Activated CD8-positive, alpha-beta memory T cell treated with anti-CD3 and anti-CD28 coated beads, Interleukin-2, amount 10 ng/mL, durations not matched to agents 7 days and 5 days (primary cell): ENCODE measurements at regions of chr7 and their contacts with region 1.

Region 1: GRCh38 chr7:107563775-107564552 is at the starts of genes COG5 and DUS4L:
- DNase-seq: peak; percentile 90
- ATAC-seq: peak; percentile 90
- H3K4me3 Mint-ChIP-seq: peak within 1 kb of the TSS; percentile 79
- H3K27ac Mint-ChIP-seq: peak within 1 kb of the TSS; percentile 91
- H3K4me1 Mint-ChIP-seq: peaks cover 61% of the 10 kb centered on the region
- H3K27me3 Mint-ChIP-seq: no peaks in the 10 kb centered on the region
- total RNA-seq, gene COG5: 37.1 to 44.6 TPM
- total RNA-seq, gene DUS4L: 9.3 to 10.2 TPM

Region 2: GRCh38 chr7:107579885-107580715 is 16.1 kb after region 1 on chr7 and contains the start of gene BCAP29:
- CTCF ChIA-PET with region 1: interaction called, 12 read pairs
- DNase-seq: peak; percentile 80
- ATAC-seq: peak; percentile 96
- H3K4me3 Mint-ChIP-seq: peak within 1 kb of the TSS; percentile 90
- H3K27ac Mint-ChIP-seq: peak within 1 kb of the TSS; percentile 93
- H3K4me1 Mint-ChIP-seq: peaks cover 32% of the 10 kb centered on the region
- H3K27me3 Mint-ChIP-seq: no peaks in the 10 kb centered on the region
- total RNA-seq, gene BCAP29: 42.7 to 47.1 TPM